ENCODE measurements at regions of chr19 and their contacts with region 1.

Region 1: GRCh38 chr19:14136509-14137281 is at the start of gene ASF1B:
- DNase-seq: peak; percentile 93 to 99 (median 97)
- ATAC-seq: peak; percentile 82 to 85 (median 84)
- H3K4me3 ChIP-seq: peak within 1 kb of the TSS; percentile 65 to 75
- H3K4me3 Mint-ChIP-seq: peak within 1 kb of the TSS; percentile 75 to 87 (median 82)
- H3K27ac ChIP-seq: peak within 1 kb of the TSS; percentile 85
- H3K27ac Mint-ChIP-seq: peak within 1 kb of the TSS; percentile 90 to 92
- H3K4me1 ChIP-seq: peaks cover 4 to 38% of the 10 kb centered on the region in 2 experiments
- H3K4me1 Mint-ChIP-seq: peaks cover 22 to 33% (median 30%) of the 10 kb centered on the region in 3 donors
- H3K27me3 ChIP-seq: no peaks in the 10 kb centered on the region
- H3K27me3 Mint-ChIP-seq: no peaks in the 10 kb centered on the region
- total RNA-seq, gene ASF1B: 2.6 to 4.4 (median 3.3) TPM

Region 2: GRCh38 chr19:14114854-14115253 is 21.8 kb before region 1 on chr19:
- CTCF ChIA-PET with region 1: interaction called, 6 to 10 read pairs
- POLR2A ChIA-PET with region 1: no interaction called
- DNase-seq: peak in 25 of 35 experiments; percentile 12 to 60 (median 30)
- ATAC-seq: no peak
- H3K4me3 ChIP-seq: no peak overlapping the region
- H3K4me3 Mint-ChIP-seq: no peak overlapping the region
- H3K27ac ChIP-seq: no peak overlapping the region
- H3K27ac Mint-ChIP-seq: peak overlapping the region in 1 of 2 donors; percentile 22
- H3K4me1 ChIP-seq: peaks cover 31 to 63% of the 10 kb centered on the region in 2 experiments
- H3K4me1 Mint-ChIP-seq: peaks cover 51 to 61% (median 59%) of the 10 kb centered on the region in 3 donors
- H3K27me3 ChIP-seq: no peaks in the 10 kb centered on the region
- H3K27me3 Mint-ChIP-seq: no peaks in the 10 kb centered on the region

Region 3: GRCh38 chr19:14147797-14148605 is 11.3 kb after region 1 on chr19:
- CTCF ChIA-PET with region 1: interaction called in 1 of 2 experiments, 21 read pairs
- POLR2A ChIA-PET with region 1: no interaction called
- DNase-seq: peak in 27 of 35 experiments; percentile 4 to 67 (median 39)
- ATAC-seq: peak; percentile 40 to 50 (median 42)
- H3K4me3 ChIP-seq: no peak overlapping the region
- H3K4me3 Mint-ChIP-seq: peak overlapping the region; percentile 28 to 82 (median 52)
- H3K27ac ChIP-seq: peak overlapping the region; percentile 88
- H3K27ac Mint-ChIP-seq: peak overlapping the region; percentile 97 to 99
- H3K4me1 ChIP-seq: peaks cover 20 to 38% of the 10 kb centered on the region in 2 experiments
- H3K4me1 Mint-ChIP-seq: peaks cover 35 to 46% (median 38%) of the 10 kb centered on the region in 3 donors
- H3K27me3 ChIP-seq: no peaks in the 10 kb centered on the region
- H3K27me3 Mint-ChIP-seq: no peaks in the 10 kb centered on the region

Region 4: DNA sequence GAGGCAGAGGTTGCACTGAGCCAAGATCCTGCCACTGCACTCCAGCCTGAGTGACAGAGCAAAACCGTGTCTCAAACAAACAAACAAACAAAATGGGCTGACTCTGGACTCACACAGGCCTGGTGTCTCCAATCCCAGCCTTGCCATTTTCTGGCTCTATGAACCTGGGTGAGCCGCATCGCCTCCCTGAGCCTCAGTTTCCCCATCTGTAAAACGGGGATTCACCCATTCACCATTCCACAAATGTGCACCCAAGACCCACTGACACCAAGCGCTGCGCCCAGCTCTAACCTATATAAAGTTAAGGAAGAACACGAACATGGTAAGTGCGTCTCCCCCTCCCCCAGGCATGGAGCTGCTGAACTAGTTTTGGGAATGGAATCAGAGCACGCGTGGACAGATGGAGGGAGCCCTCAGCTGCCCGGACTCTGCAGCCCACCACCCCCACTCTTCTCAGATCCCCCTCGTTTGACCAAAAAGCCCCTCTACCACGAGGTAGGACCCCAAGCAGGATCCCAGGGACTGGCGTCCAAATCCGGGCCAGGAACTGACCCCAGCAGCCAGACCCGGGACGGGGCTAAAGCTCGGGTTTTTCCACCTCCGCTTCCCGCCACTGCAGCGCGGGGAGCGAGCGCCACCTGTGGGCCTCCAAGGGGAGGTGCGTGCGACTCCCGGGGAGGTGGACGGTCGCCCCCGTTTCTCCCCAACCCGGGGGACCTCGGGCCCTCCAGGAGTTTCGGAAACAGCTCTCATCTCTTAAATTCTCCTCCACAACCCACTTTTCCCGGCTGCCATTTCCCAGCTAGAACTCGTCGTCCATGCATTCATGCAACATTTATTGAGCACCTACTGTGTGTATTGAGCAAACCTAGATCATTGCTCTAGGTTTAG is 211.5 kb after region 1 on chr19:
- CTCF ChIA-PET with region 1: interaction called in 1 of 2 experiments, 25 read pairs
- POLR2A ChIA-PET with region 1: interaction called in 1 of 2 experiments, 3 read pairs
- DNase-seq: peak in 33 of 35 experiments; percentile 13 to 79 (median 53)
- ATAC-seq: peak; percentile 70 to 79 (median 76)
- H3K4me3 ChIP-seq: peak overlapping the region; percentile 27 to 30
- H3K4me3 Mint-ChIP-seq: peak overlapping the region; percentile 14 to 46 (median 41)
- H3K27ac ChIP-seq: peak overlapping the region; percentile 22
- H3K27ac Mint-ChIP-seq: peak overlapping the region in 1 of 2 donors; percentile 44
- H3K4me1 ChIP-seq: peaks cover 2 to 29% of the 10 kb centered on the region in 2 experiments
- H3K4me1 Mint-ChIP-seq: peaks cover 16 to 24% (median 23%) of the 10 kb centered on the region in 3 donors
- H3K27me3 ChIP-seq: no peaks in the 10 kb centered on the region
- H3K27me3 Mint-ChIP-seq: no peaks in the 10 kb centered on the region

Region 5: DNA sequence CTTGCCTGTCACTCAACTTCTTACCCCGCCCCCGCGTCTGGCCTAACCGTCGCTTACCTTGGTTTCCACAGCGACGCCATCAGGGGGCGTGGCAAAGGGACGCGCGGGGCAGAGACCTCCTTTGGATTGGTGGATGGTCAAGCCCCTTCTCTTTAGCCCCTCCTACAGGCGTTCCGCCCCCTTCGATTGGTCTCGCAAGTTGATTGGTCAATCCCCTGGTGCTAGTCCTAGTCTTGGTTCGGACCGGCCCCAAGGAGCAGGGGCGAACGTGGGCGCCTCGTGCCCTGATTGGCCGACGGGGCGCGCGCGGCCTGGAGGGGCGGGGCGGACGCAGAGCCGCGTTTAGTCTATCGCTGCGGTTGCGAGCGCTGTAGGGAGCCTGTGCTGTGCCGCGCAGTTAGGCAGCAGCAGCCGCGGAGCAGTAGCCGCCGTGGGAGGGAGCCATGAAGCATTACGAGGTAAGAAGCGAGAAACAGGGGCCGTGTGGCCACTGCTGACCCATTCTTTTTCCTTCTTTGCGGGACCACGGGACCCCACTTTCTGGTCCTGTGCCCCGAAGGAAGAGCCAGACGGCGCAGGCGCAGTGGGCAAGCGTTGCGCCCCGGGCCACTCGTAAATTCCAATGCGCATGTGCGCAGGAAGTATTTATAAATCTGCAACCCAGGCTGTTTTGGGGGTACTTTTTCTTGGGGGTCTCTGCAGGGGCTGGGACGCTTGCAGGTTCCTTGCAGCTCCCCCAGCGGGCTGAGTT is 392.7 kb after region 1 on chr19 and contains the start of gene TECR:
- CTCF ChIA-PET with region 1: no interaction called
- POLR2A ChIA-PET with region 1: interaction called in 1 of 2 experiments, 10 read pairs
- DNase-seq: peak; percentile 99 to 100 (median 100)
- ATAC-seq: peak; percentile 90 to 97 (median 95)
- H3K4me3 ChIP-seq: peak within 1 kb of the TSS; percentile 83 to 89
- H3K4me3 Mint-ChIP-seq: peak within 1 kb of the TSS; percentile 84 to 93 (median 92)
- H3K27ac ChIP-seq: peak within 1 kb of the TSS; percentile 92
- H3K27ac Mint-ChIP-seq: peak within 1 kb of the TSS; percentile 97 to 98
- H3K4me1 ChIP-seq: peaks cover 11 to 49% of the 10 kb centered on the region in 2 experiments
- H3K4me1 Mint-ChIP-seq: peaks cover 33 to 67% (median 57%) of the 10 kb centered on the region in 3 donors
- H3K27me3 ChIP-seq: no peaks in the 10 kb centered on the region
- H3K27me3 Mint-ChIP-seq: no peaks in the 10 kb centered on the region
- total RNA-seq, gene TECR: 137 to 207 (median 171) TPM

Measured in T-cell (primary cell).